ENCODE measurements at regions of chr6 and their contacts with region 1.

Region 1: GRCh38 chr6:80605165-80605989 is 498.9 kb downstream of the BCKDHB start:
- DNase-seq: peak in 5 of 9 donors; percentile 3 to 25 (median 13)
- ATAC-seq: no peak
- H3K4me3 ChIP-seq: no peak overlapping the region
- H3K4me3 Mint-ChIP-seq: no peak overlapping the region
- H3K27ac ChIP-seq: no peak overlapping the region
- H3K27ac Mint-ChIP-seq: no peak overlapping the region
- H3K4me1 ChIP-seq: no peaks in the 10 kb centered on the region
- H3K4me1 Mint-ChIP-seq: no peaks in the 10 kb centered on the region
- H3K27me3 ChIP-seq: no peaks in the 10 kb centered on the region
- H3K27me3 Mint-ChIP-seq: peaks cover 4 to 35% (median 18%) of the 10 kb centered on the region in 5 donors

Region 2: DNA sequence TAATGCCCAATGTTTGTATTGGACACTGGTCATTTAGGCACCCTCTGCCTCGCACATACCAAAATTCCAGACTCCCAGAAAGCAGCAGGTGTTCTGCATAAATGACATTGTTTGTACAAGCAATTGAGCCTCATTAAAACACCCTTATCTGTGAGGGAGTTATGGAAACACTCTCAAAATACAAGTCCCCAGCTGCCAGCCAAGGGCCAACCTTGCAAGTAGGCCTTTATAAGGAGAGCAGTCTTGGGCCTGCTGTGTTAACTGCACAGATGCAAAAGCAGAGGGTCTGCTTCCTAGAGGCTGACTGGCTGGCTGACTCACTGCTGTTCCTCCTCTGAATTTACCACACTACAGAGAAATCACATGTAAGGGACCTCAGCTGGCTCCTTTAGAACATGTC is 1220.5 kb before region 1 on chr6:
- CTCF ChIA-PET with region 1: no interaction called
- POLR2A ChIA-PET with region 1: no interaction called
- intact Hi-C with region 1: no loop called
- DNase-seq: no peak
- ATAC-seq: no peak
- H3K4me3 ChIP-seq: no peak overlapping the region
- H3K4me3 Mint-ChIP-seq: no peak overlapping the region
- H3K27ac ChIP-seq: no peak overlapping the region
- H3K27ac Mint-ChIP-seq: no peak overlapping the region
- H3K4me1 ChIP-seq: no peaks in the 10 kb centered on the region
- H3K4me1 Mint-ChIP-seq: no peaks in the 10 kb centered on the region
- H3K27me3 ChIP-seq: no peaks in the 10 kb centered on the region
- H3K27me3 Mint-ChIP-seq: peaks cover 0 to 8% (median 4%) of the 10 kb centered on the region in 5 donors

Region 3: DNA sequence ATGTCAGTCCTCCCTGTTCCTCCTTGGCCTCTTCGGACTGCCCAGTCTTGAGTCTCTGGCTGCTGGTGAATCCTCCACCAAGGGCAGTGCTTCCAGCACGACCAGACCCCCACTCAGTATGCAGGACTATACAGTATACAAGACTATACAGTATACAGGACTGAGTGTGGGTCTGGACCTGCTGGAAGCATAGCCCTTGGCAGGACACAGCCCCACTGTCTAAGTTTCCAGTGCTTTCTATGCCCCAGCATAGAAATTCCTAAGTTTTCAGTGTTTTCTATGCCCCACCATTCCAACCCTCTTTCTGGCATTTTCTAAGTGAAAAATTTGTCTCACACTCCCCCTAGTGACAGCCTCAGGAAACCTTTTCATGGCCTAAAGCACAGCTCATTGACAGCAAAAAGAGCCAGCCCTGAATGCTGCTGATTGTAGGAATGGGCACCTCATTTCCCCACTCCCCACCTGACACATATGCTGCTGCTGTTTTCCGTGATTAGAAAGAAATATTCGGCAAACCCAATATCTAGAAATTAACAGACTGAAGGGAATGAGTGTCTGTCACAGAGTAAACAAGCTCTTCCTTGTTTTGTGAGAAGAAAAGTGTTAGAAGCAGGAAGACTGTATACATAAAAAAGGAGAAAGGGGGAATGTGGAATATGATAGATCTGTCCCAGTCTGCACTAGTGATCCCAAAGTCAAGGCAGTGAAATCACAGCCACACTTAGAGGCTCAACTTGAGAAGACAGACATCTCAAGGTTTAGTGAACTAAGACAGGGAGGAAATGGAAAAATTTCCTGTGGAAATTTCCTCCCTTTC is 1435.2 kb after region 1 on chr6:
- CTCF ChIA-PET with region 1: no interaction called
- POLR2A ChIA-PET with region 1: no interaction called
- intact Hi-C with region 1: loop called (anchors 5 to 10 kb)
- DNase-seq: no peak
- ATAC-seq: peak; percentile 38
- H3K4me3 ChIP-seq: no peak overlapping the region
- H3K4me3 Mint-ChIP-seq: no peak overlapping the region
- H3K27ac ChIP-seq: no peak overlapping the region
- H3K27ac Mint-ChIP-seq: no peak overlapping the region
- H3K4me1 ChIP-seq: no peaks in the 10 kb centered on the region
- H3K4me1 Mint-ChIP-seq: no peaks in the 10 kb centered on the region
- H3K27me3 ChIP-seq: no peaks in the 10 kb centered on the region
- H3K27me3 Mint-ChIP-seq: peaks cover 0 to 13% (median 4%) of the 10 kb centered on the region in 5 donors